ENCODE measurements at regions of chr1 and their contacts with region 1.

Region 1: GRCh38 chr1:25904943-25905679 is 1.1 kb downstream of the STMN1 start:
- DNase-seq: peak; percentile 95
- ATAC-seq: peak; percentile 77
- H3K4me3 Mint-ChIP-seq: peak overlapping the region; percentile 95
- H3K27ac Mint-ChIP-seq: peak overlapping the region; percentile 94
- H3K4me1 Mint-ChIP-seq: peaks cover 41% of the 10 kb centered on the region
- H3K27me3 Mint-ChIP-seq: peaks cover 20% of the 10 kb centered on the region

Region 2: GRCh38 chr1:25922056-25922969 is 17.2 kb after region 1 on chr1:
- POLR2A ChIA-PET with region 1: interaction called, 16 read pairs
- DNase-seq: peak; percentile 74
- ATAC-seq: peak; percentile 83
- H3K4me3 Mint-ChIP-seq: peak overlapping the region; percentile 86
- H3K27ac Mint-ChIP-seq: peak overlapping the region; percentile 72
- H3K4me1 Mint-ChIP-seq: peaks cover 21% of the 10 kb centered on the region
- H3K27me3 Mint-ChIP-seq: peaks cover 41% of the 10 kb centered on the region

Region 3: DNA sequence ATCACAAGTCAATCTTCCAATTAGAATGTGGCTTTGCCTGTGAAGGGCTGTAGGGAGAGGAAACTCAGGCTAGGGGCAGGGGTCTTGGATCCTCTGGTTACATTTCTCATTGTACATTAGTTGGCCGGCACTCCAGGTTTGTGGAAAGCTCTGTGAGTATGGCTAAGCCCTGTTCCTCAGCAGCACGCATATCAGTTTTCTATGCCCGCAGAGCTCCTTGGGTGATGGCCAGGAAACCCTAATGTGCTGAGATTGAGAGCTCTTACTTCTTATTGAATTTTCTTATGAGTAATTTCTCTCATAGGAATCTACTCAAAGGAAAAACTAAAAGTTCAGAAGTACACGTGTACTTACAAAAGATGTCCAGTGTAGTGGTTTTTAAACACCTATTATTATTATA is 31.8 kb after region 1 on chr1:
- POLR2A ChIA-PET with region 1: no interaction called
- DNase-seq: no peak
- ATAC-seq: no peak
- H3K4me3 Mint-ChIP-seq: no peak overlapping the region
- H3K27ac Mint-ChIP-seq: peak overlapping the region; percentile 16
- H3K4me1 Mint-ChIP-seq: peaks cover 2% of the 10 kb centered on the region
- H3K27me3 Mint-ChIP-seq: peaks cover 6% of the 10 kb centered on the region

Region 4: GRCh38 chr1:25971066-25971810 is 66.1 kb after region 1 on chr1:
- POLR2A ChIA-PET with region 1: interaction called, 11 read pairs
- DNase-seq: no peak
- ATAC-seq: peak; percentile 81
- H3K4me3 Mint-ChIP-seq: peak overlapping the region; percentile 42
- H3K27ac Mint-ChIP-seq: peak overlapping the region; percentile 83
- H3K4me1 Mint-ChIP-seq: peaks cover 19% of the 10 kb centered on the region
- H3K27me3 Mint-ChIP-seq: no peaks in the 10 kb centered on the region

Measured in activated naive CD8-positive, alpha-beta T cell treated with anti-CD3 and anti-CD28 coated beads, Interleukin-2, amount 10 ng/mL, durations not matched to agents 7 days and 5 days (primary cell).